Common myeloid progenitor, CD34-positive (primary cell): ENCODE measurements at regions of chr5 and their contacts with region 1.

Region 1: DNA sequence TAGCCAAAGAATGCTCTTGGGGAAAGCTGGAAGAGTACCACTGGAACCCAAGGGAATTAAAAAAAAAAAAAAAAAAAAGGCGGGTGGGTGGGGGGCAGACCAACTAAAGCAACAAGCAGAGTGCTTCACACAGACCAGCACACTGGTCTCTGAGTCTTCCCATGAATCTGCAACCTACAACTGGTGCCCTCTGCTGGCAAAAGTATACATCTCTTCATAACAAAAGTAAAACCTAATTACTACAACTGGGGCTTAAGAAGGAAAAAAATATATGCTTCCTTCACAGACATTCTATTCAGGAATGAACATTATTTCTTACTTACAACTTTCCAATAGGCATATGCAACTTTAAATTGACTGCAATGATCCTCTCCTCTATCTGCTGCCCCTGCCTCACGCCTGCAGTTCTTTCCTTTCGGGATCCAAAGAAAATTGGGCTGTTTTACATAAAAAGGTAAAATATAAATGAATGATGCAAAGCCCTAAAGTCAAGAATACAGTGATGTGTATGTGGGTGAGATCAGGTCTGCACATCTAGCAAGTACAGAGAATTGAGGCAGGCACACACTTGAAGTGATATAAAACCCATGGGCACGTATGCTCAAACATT is 7.2 kb upstream of the KLHL3 start:
- DNase-seq: peak; percentile 83 to 90 (median 85)
- H3K4me3 ChIP-seq: no peak overlapping the region
- H3K27ac ChIP-seq: no peak overlapping the region
- H3K4me1 ChIP-seq: peaks cover 0 to 3% (median 0%) of the 10 kb centered on the region in 4 experiments
- H3K27me3 ChIP-seq: no peaks in the 10 kb centered on the region

Region 2: GRCh38 chr5:137629646-137630045 is 113.5 kb before region 1 on chr5:
- CTCF ChIA-PET with region 1: interaction called, 87 read pairs
- POLR2A ChIA-PET with region 1: interaction called, 3 read pairs
- DNase-seq: peak; percentile 52 to 78 (median 72)
- H3K4me3 ChIP-seq: peak overlapping the region in 1 of 7 experiments; percentile 67
- H3K27ac ChIP-seq: no peak overlapping the region
- H3K4me1 ChIP-seq: peaks cover 0 to 10% (median 5%) of the 10 kb centered on the region in 4 experiments
- H3K27me3 ChIP-seq: no peaks in the 10 kb centered on the region

Region 3: GRCh38 chr5:137635521-137635921 is 107.6 kb before region 1 on chr5:
- CTCF ChIA-PET with region 1: interaction called, 87 read pairs
- POLR2A ChIA-PET with region 1: interaction called, 3 read pairs
- DNase-seq: no peak
- H3K4me3 ChIP-seq: no peak overlapping the region
- H3K27ac ChIP-seq: no peak overlapping the region
- H3K4me1 ChIP-seq: peaks cover 0 to 4% (median 0%) of the 10 kb centered on the region in 4 experiments
- H3K27me3 ChIP-seq: no peaks in the 10 kb centered on the region

Region 4: GRCh38 chr5:137641148-137641547 is 102.0 kb before region 1 on chr5:
- CTCF ChIA-PET with region 1: interaction called, 12 read pairs
- POLR2A ChIA-PET with region 1: interaction called, 3 read pairs
- DNase-seq: no peak
- H3K4me3 ChIP-seq: no peak overlapping the region
- H3K27ac ChIP-seq: no peak overlapping the region
- H3K4me1 ChIP-seq: peaks cover 0 to 2% (median 0%) of the 10 kb centered on the region in 4 experiments
- H3K27me3 ChIP-seq: no peaks in the 10 kb centered on the region

Region 5: DNA sequence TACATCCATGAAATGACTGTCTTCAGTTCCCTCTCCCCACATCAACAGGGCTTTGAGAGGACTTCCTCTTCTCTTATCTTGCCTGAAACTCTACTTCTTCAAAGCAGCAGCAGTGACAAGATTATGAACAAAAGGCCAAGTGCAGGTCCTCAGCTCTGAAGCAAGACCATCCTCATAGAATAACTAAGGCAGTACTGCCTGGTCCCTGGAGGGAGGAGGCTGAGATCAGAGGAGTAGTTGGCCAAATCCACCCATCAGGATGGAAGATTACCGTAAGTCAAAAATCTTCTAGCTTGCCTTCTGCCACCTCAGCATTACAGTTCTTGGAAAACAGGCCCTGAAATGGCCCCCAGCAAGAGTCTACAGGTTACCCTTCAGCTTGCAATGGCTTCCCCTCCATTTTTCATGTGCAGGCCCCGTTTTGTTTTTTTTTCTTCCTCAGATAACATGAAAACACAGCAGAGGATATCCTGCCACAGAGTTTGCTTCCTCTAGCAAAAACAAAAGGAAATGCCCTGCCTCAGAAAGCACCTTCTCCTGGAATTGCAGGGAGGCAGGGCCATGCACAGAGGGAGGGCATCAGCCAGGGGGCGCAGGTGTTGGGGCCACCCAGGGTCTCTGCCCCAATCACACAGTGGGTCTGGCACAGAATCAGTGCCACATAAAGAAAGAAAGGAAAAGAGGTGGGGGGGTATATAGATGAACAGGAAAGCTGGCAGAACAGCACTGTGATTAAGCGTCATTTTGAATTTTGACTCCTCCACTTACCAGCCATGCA is 47.3 kb before region 1 on chr5:
- CTCF ChIA-PET with region 1: interaction called, 36 read pairs
- POLR2A ChIA-PET with region 1: no interaction called
- DNase-seq: peak; percentile 54 to 92 (median 83)
- H3K4me3 ChIP-seq: peak overlapping the region in 3 of 7 experiments; percentile 15 to 29 (median 18)
- H3K27ac ChIP-seq: peak overlapping the region; percentile 18 to 65
- H3K4me1 ChIP-seq: peaks cover 18 to 68% (median 47%) of the 10 kb centered on the region in 4 experiments
- H3K27me3 ChIP-seq: no peaks in the 10 kb centered on the region

Region 6: GRCh38 chr5:137728048-137728447 is 15.1 kb before region 1 on chr5:
- CTCF ChIA-PET with region 1: interaction called, 20 read pairs
- POLR2A ChIA-PET with region 1: no interaction called
- DNase-seq: no peak
- H3K4me3 ChIP-seq: no peak overlapping the region
- H3K27ac ChIP-seq: no peak overlapping the region
- H3K4me1 ChIP-seq: peaks cover 3 to 27% (median 9%) of the 10 kb centered on the region in 4 experiments
- H3K27me3 ChIP-seq: no peaks in the 10 kb centered on the region

Region 7: DNA sequence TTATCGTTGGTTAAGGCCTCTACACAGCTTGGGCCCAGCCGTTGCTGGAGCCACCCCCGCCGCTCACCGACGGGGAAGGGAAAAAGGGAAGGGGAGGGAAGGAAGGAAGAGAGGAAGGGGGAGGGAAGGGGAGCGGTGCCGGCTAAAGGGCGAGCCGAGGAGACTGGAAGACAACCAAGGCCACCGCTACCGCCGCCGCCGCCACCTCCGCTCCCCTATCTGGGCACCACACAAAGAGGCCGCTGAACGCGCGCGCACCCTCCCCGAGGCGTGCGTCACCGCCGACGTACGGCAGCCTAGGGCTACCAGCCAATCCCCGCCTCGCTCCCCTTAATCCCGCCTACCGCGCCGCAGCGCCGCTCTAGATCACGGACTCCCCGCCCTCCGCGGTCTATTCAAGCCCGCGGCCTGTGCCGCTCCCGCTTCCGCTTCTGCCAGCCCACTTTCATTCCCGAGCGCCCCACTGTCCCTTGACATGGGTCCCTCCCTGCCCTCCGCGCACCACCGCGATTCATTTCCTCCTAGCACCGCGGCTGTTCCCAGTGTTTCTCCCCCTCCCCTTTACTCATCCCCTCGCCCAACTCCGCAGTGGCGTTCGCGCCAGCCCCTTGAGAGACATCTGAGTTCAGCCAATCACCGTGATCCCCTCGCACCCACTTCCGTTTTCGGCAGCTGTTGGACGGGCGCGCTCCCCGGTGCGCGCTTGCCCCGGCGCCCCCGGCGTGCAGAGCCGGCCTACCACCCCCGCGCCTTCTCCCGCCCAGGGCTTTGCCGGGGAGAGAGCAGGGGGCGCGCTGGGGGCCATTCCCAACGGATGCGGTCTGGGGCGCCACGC is 11.2 kb after region 1 on chr5 and contains the start of gene HNRNPA0:
- CTCF ChIA-PET with region 1: interaction called, 19 read pairs
- POLR2A ChIA-PET with region 1: interaction called, 3 read pairs
- DNase-seq: peak; percentile 99 to 100 (median 100)
- H3K4me3 ChIP-seq: peak within 1 kb of the TSS; percentile 85 to 100 (median 99)
- H3K27ac ChIP-seq: peak within 1 kb of the TSS; percentile 100
- H3K4me1 ChIP-seq: peaks cover 9 to 33% (median 23%) of the 10 kb centered on the region in 4 experiments
- H3K27me3 ChIP-seq: no peaks in the 10 kb centered on the region